T-cell (primary cell): ENCODE measurements at regions of chr11 and their contacts with region 1.

Region 1: GRCh38 chr11:106156290-106156937 is 79.0 kb downstream of the AASDHPPT start:
- DNase-seq: peak in 1 of 35 experiments; percentile 7
- ATAC-seq: no peak
- H3K4me3 ChIP-seq: no peak overlapping the region
- H3K4me3 Mint-ChIP-seq: no peak overlapping the region
- H3K27ac ChIP-seq: no peak overlapping the region
- H3K27ac Mint-ChIP-seq: no peak overlapping the region
- H3K4me1 ChIP-seq: no peaks in the 10 kb centered on the region
- H3K4me1 Mint-ChIP-seq: peaks cover 0 to 2% (median 0%) of the 10 kb centered on the region in 3 donors
- H3K27me3 ChIP-seq: no peaks in the 10 kb centered on the region
- H3K27me3 Mint-ChIP-seq: peaks cover 5 to 8% of the 10 kb centered on the region in 2 donors

Region 2: GRCh38 chr11:106624377-106624776 is 468.0 kb after region 1 on chr11:
- CTCF ChIA-PET with region 1: no interaction called
- POLR2A ChIA-PET with region 1: no interaction called
- DNase-seq: no peak
- ATAC-seq: no peak
- H3K4me3 ChIP-seq: no peak overlapping the region
- H3K4me3 Mint-ChIP-seq: no peak overlapping the region
- H3K27ac ChIP-seq: no peak overlapping the region
- H3K27ac Mint-ChIP-seq: no peak overlapping the region
- H3K4me1 ChIP-seq: no peaks in the 10 kb centered on the region
- H3K4me1 Mint-ChIP-seq: no peaks in the 10 kb centered on the region
- H3K27me3 ChIP-seq: no peaks in the 10 kb centered on the region
- H3K27me3 Mint-ChIP-seq: no peaks in the 10 kb centered on the region

Region 3: DNA sequence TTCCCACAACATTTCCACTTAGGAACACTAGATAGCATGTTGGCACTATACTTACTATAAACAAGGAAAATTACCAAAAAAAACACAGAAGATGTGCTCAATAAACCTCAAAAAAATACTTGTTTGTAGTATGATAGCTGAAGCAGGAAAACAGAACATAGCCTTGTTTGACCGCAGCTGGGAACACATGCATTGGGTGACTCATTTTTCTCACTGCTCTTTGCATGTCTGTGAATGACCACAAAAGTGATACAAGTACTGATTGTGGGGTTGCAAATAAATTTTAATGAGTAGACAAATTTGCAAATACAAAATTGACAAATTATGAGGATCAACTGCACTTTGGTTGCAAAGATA is 884.7 kb after region 1 on chr11:
- CTCF ChIA-PET with region 1: interaction called in 1 of 2 experiments, 10 read pairs
- POLR2A ChIA-PET with region 1: no interaction called
- DNase-seq: no peak
- ATAC-seq: no peak
- H3K4me3 ChIP-seq: no peak overlapping the region
- H3K4me3 Mint-ChIP-seq: no peak overlapping the region
- H3K27ac ChIP-seq: no peak overlapping the region
- H3K27ac Mint-ChIP-seq: no peak overlapping the region
- H3K4me1 ChIP-seq: no peaks in the 10 kb centered on the region
- H3K4me1 Mint-ChIP-seq: no peaks in the 10 kb centered on the region
- H3K27me3 ChIP-seq: no peaks in the 10 kb centered on the region
- H3K27me3 Mint-ChIP-seq: no peaks in the 10 kb centered on the region